PC-3 (cell line): ENCODE measurements at regions of chr3 and their contacts with region 1.

Region 1: DNA sequence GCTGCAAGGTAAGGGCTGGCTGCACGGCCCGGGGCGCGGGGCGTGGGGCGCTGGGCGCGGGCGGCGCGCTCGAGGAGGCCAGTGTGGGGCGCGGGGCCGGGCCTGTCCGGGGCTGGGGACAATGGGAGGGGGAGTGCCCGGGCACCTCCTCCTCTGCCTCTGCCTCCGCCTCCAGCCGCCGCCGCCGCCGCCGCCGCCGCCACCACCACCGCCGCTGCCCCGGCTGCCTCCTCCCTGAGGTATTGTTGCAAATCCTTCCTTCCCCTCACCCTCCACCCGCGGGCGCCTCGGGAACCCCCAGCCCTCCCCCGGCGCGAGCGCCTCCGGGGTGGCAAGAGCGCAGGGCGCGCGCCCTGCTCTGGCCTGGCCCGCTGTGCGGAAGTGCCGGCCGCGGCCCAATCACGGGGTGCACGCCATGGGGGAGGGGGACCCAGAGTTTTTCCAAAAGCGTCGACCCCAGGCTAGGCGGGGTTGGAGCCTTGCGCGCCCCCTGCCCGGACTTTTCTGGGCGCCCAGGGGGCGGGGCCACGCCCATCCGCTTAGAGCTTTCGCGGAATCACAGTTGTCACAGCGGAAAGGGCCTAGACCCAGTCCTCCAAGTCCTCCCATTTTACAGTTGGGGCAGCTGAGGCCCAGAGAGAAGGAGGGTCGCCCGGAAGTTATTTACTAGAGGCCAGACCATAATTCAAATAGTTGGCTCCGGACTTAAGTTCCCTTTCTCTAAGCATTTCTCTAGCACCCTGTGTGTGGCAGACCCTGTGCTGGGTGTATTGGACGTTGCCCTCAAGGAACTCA is at the start of gene LPP:
- DNase-seq: peak; percentile 58
- ATAC-seq: peak; percentile 82
- H3K4me3 ChIP-seq: peak within 1 kb of the TSS; percentile 97
- H3K27ac ChIP-seq: peak within 1 kb of the TSS; percentile 88
- H3K4me1 ChIP-seq: peaks cover 29% of the 10 kb centered on the region
- H3K27me3 ChIP-seq: no peaks in the 10 kb centered on the region
- CTCF ChIP-seq: 0 out of 2 replicates have a peak, but pooled peaks have one; percentile 14
- total RNA-seq, gene LPP: 20.4 and 21.3 TPM in 2 replicates

Region 2: DNA sequence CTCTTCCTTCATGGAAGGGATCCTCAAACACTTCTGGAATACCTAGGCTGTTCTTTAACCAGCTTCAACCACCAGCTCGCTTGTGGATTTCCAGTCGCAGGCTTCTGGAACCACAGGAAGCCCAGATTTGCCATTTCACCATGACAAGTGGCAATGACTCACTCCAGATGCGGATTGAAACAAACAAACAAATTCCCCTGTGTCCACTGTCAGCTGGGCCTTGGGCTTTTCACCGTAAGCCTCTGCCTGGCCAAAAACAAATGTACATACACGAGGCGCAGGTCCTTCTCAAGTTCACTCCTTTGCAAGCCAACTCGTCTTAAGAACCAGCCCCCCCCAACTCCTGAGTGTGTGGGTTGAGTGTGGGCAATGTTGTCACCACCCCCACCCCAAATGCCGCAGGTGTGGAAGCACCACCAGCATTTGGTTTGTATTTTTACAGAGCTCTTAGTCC is 417.8 kb before region 1 on chr3:
- CTCF ChIA-PET with region 1: no interaction called
- POLR2A ChIA-PET with region 1: no interaction called
- intact Hi-C with region 1: no loop called
- DNase-seq: peak; percentile 45
- ATAC-seq: no peak
- H3K4me3 ChIP-seq: no peak overlapping the region
- H3K27ac ChIP-seq: no peak overlapping the region
- H3K4me1 ChIP-seq: peaks cover 25% of the 10 kb centered on the region
- H3K27me3 ChIP-seq: no peaks in the 10 kb centered on the region
- CTCF ChIP-seq: no peak

Region 3: GRCh38 chr3:188037216-188037718 is 116.9 kb before region 1 on chr3:
- CTCF ChIA-PET with region 1: no interaction called
- POLR2A ChIA-PET with region 1: no interaction called
- intact Hi-C with region 1: loop called (anchors 5 kb)
- DNase-seq: peak; percentile 65
- ATAC-seq: peak; percentile 90
- H3K4me3 ChIP-seq: no peak overlapping the region
- H3K27ac ChIP-seq: no peak overlapping the region
- H3K4me1 ChIP-seq: peaks cover 16% of the 10 kb centered on the region
- H3K27me3 ChIP-seq: no peaks in the 10 kb centered on the region
- CTCF ChIP-seq: peak; percentile 69

Region 4: GRCh38 chr3:188230962-188231361 is 76.8 kb after region 1 on chr3:
- CTCF ChIA-PET with region 1: no interaction called
- POLR2A ChIA-PET with region 1: no interaction called
- intact Hi-C with region 1: loop called (anchors 2 kb)
- DNase-seq: peak; percentile 85
- ATAC-seq: peak; percentile 65
- H3K4me3 ChIP-seq: no peak overlapping the region
- H3K27ac ChIP-seq: peak overlapping the region; percentile 78
- H3K4me1 ChIP-seq: peaks cover 51% of the 10 kb centered on the region
- H3K27me3 ChIP-seq: no peaks in the 10 kb centered on the region
- CTCF ChIP-seq: no peak